Left cardiac atrium (tissue), 4 donors: ENCODE measurements at regions of chr2 and their contacts with region 1.

Region 1: DNA sequence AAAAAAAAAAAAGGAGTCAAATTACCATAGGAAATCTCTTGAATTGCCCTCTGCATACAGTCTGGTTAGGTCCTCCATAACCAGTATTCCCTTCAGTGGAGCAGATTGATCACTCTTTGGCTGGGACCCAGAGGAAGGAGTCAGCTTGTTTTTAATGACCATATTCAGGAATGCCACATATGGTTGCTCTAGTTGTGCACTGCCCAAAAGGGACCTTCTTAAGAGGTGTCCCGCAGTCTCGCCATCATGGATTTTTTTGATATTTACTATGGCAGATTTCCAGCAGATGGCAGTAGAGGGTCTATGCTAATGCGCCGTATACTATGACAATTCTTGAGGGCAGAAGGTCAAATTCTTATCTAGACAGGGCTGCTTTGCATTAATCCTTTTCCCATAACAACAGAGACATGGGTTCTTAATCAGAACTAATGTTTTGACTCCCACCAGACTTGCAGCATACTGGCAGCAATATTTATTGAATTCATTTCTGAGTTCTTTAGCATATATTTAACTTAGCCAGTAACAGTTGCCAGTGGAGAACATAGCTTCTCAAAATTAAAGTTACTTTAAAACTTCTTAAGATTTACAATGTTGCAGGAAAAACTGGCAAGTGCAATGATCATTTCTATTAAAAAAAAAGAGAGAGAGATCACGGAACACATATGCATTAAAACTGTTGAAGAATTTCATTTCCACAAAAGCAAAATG is 31.8 kb upstream of the INPP4A start:
- DNase-seq: no peak
- ATAC-seq: peak; percentile 59 to 75

Region 2: GRCh38 chr2:98282109-98282508 is 130.8 kb before region 1 on chr2:
- intact Hi-C with region 1: no loop called
- DNase-seq: no peak
- ATAC-seq: no peak

Region 3: GRCh38 chr2:98468621-98469236 is 55.8 kb after region 1 on chr2:
- intact Hi-C with region 1: no loop called
- DNase-seq: no peak
- ATAC-seq: no peak

Region 4: GRCh38 chr2:98518090-98518489 is 105.2 kb after region 1 on chr2:
- intact Hi-C with region 1: loop called in 1 of 2 experiments (anchors 10 kb)
- DNase-seq: no peak
- ATAC-seq: peak; percentile 7 to 64

Region 5: DNA sequence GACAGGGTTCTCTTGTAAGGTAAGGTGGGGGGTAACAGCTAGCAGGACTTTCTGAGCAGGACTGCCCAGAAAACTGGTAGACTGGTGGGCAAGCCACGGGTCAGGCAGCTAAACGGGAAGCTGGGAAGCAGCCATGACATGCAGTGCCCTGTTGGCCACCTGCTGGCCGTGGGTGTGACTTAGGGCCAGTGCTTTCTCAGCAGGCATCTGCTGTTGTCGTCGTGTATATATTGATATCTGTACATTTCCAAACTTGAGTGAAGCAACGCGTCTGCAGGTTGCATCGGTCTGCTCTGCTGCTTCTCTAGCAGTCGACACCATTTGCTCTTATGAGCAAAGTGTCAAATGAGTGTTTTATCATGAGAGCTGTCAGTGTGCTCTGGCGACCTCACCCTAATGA is 164.4 kb after region 1 on chr2:
- intact Hi-C with region 1: loop called in 1 of 2 experiments (anchors 10 kb)
- DNase-seq: no peak
- ATAC-seq: peak; percentile 11 to 42

Region 6: DNA sequence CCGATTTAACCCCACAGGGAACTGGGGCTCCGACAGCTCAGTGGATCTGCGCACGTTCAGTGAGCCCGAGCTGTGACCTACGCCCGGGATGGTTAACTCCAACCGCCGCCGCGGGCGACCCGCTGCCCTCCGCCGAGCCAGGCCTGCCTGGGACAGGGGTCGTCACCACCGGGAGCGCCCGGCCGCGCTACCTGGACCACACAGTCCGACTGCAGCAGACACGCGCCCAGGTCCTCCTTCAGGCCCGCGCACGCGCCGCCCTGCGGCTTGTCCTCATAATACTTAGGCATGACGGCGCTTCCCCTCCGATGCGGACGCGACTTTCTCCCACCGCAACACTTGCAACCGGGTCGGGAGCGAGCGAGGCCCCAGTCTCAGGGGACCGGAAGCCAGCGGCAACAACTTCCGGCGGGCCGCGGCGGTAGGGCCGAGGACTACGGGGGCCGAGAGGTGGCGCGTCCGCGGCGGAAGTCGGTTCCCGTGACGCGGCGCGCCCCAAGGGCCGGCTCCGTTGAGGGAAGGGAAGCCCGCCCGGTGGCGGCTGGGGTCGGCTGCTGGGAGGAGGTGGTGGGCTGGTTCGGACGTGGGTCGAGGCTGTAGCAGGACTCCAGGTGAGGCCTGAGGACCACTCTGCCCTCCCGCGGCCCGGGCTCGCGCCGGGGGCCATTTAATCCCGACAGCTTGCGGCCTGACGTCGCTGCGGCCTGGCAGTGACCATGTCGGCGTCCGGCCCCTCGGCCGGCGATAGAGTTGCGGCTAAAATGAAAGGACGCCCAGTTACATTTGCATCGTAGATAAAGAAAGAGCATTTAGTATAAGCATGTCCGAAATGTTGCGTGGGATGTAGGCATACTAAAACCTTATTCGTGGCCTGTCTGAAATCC is 195.5 kb after region 1 on chr2 and contains the starts of genes COA5 and UNC50:
- intact Hi-C with region 1: loop called (anchors 5 to 10 kb)
- DNase-seq: peak; percentile 93
- ATAC-seq: peak; percentile 97 to 98
- total RNA-seq, gene COA5: 23.1 to 23.7 TPM
- total RNA-seq, gene UNC50: 28.3 to 33.7 TPM

Region 7: GRCh38 chr2:98835831-98836385 is 423.0 kb after region 1 on chr2:
- intact Hi-C with region 1: loop called in 1 of 2 experiments (anchors 10 kb)
- DNase-seq: no peak
- ATAC-seq: no peak